Transverse colon (tissue), 4 donors: ENCODE measurements at regions of chr1 and their contacts with region 1.

Region 1: GRCh38 chr1:35557292-35558063 is at the starts of genes KIAA0319L and NCDN:
- DNase-seq: peak; percentile 97
- H3K4me3 ChIP-seq: peak within 1 kb of the TSS; percentile 60 to 89 (median 70)
- H3K27ac ChIP-seq: peak within 1 kb of the TSS; percentile 88 to 96 (median 95)
- H3K4me1 ChIP-seq: peaks cover 17 to 43% (median 37%) of the 10 kb centered on the region in 4 donors
- H3K27me3 ChIP-seq: no peaks in the 10 kb centered on the region
- CTCF ChIP-seq: no peak
- EP300 ChIP-seq: no peak
- POLR2A ChIP-seq: peak; percentile 68
- total RNA-seq, gene KIAA0319L: 91.7 to 112 (median 97.6) TPM
- total RNA-seq, gene NCDN: 6.7 to 11.3 (median 9.5) TPM

Region 2: DNA sequence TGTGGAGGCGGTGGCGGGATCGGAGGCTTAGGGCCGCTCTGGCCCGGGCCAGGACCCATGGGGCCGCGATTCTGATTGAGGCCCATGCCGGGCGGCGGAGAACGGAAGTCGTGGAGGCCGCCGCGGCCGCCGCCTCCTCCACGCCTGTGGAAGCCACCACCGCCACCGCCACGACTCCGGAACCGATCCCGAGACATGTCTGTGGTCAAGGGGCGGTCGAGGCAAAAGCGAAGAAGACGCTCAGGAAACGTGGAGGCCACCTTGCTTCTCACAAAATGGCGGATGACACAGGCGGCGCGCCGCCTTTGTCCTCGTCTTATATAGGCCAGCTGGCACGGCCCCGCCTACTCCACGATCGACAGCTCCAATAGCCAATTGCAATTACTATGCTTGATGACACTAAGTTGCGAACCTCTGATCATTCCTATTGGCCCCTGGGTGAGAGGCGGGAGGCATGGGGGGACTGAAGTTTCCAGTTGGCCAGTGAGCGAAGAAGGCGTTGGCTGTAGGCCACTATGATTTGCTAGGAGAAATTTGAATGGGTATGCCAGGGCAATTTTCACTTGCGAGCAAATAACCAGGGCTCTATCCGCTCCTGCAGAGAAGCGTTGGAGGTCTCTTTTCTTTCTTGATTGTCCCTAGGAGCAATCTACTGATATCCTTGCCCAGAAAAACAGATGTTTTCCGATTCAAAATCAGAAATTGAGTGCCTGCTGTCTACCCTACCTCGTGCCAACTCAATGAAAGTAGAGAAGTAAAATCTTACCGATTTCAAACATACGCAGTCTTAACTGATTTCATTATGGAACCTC is 364.4 kb before region 1 on chr1 and contains the start of gene SFPQ:
- in situ Hi-C with region 1: loop called in 2 of 4 experiments (anchors 25 kb)
- intact Hi-C with region 1: no loop called
- DNase-seq: peak; percentile 97
- H3K4me3 ChIP-seq: peak within 1 kb of the TSS; percentile 91 to 100 (median 98)
- H3K27ac ChIP-seq: peak within 1 kb of the TSS; percentile 99 to 100 (median 100)
- H3K4me1 ChIP-seq: peaks cover 20 to 39% (median 26%) of the 10 kb centered on the region in 4 donors
- H3K27me3 ChIP-seq: no peaks in the 10 kb centered on the region
- CTCF ChIP-seq: no peak
- EP300 ChIP-seq: no peak
- POLR2A ChIP-seq: peak; percentile 97
- total RNA-seq, gene SFPQ: 169 to 431 (median 245) TPM